Right ventricle myocardium inferior (tissue), 1 donor: ENCODE measurements at regions of chr14 and their contacts with region 1.

Region 1: GRCh38 chr14:91323671-91324605 is 79.4 kb upstream of the GPR68 start:
- DNase-seq: peak; percentile 94
- ATAC-seq: peak; percentile 82

Region 2: GRCh38 chr14:90599339-90599738 is 724.6 kb before region 1 on chr14:
- intact Hi-C with region 1: no loop called
- DNase-seq: no peak
- ATAC-seq: no peak

Region 3: GRCh38 chr14:91078095-91078737 is 245.7 kb before region 1 on chr14:
- intact Hi-C with region 1: no loop called
- DNase-seq: no peak
- ATAC-seq: no peak

Region 4: DNA sequence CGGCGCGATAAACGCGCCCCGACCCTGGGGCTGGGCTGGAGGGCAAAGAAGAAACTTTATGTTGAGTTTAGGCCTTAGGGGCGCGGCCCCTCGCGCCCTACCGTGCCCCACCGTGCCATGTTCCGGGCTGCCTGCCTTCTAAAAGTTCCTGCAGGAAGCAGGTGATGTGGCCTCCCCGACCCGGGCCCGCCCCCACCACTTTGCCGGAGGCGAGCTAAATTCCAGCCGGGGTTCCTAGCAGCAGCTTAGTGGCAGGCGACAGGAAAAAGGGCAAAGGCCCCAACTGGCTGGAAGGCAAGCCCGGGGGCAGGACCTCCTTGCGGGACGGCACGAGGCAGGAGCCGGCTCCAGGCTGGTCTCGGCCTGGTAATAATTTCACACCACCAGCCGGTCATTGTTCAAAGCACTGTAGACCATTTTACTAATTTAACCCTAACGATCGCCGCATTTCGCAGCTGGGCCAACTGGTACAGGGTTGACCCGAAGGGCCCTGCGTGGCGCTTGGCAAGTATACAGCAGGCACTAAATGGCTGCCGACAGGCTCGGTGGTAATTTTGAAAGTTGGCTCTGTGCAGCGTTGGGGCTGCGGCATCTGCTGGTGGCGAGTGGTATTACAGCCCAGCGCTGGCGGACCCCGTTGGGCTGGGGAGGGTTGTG is 94.6 kb after region 1 on chr14:
- intact Hi-C with region 1: loop called (anchors 1 kb)
- DNase-seq: peak; percentile 89
- ATAC-seq: peak; percentile 76

Region 5: DNA sequence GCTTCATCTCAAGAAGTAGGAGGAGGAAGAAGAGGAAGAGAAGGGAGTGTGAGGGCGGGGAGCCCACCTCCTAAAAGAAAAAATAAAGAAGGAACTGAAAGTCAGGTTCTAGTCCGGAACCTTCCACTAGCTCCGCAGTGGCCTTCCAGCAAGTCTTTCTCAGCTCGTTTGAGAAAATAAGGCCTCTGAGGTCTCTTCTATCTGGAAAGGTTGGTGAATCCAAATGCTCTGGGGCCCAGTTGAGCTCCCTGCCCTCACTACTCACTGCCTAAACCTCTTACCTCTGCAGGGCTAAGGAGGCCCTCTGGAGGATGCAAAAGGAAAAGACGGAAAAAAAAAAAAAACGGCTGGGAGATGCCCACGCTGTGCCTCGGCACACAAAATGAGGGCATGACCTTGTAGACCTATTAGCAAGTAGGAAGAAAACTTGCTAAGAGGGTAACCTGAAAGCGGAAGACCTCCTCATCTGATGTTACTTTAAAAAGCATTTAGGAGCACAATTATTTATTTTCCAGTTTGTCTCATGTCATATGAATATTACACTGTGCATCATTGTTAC is 587.6 kb after region 1 on chr14:
- intact Hi-C with region 1: loop called (anchors 10 kb)
- DNase-seq: no peak
- ATAC-seq: peak; percentile 65